Heart left ventricle (tissue), 16 donors: ENCODE measurements at regions of chrX and their contacts with region 1.

Region 1: DNA sequence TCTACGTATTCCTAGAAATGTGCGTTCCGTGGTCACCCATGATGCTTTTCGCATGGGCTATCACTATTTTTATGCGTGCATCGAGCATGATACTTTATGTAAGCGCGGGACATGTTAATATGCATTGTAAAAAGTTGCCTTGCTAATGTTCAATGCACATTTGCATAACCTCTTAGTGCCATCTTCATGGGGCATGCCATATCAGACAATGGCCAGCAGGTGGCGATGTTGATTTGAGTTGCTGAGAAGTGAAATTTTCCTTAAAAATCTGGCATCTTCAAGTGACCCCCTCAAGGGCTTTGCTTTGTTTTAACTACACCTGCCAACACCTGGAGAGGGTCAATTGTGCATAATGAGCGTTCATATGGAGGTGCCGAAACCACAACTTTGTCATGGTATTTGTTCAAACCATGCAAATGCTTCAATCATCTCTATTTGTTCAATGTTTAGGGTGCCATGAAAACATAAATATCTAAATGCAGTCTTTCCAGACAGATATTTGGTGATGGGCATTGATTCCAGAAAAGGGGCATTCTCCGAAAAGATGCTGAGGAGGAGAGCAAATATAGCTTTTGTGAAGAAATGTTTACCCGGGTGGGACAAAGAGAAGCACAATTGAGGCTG is 833.9 kb upstream of the PRKX start:
- DNase-seq: no peak
- ATAC-seq: no peak
- H3K4me3 ChIP-seq: no peak overlapping the region
- H3K27ac ChIP-seq: no peak overlapping the region
- H3K4me1 ChIP-seq: no peaks in the 10 kb centered on the region
- H3K27me3 ChIP-seq: no peaks in the 10 kb centered on the region
- CTCF ChIP-seq: peak; percentile 54 to 94 (median 68)
- POLR2A ChIP-seq: no peak

Region 2: GRCh38 chrX:3585719-3586118 is 961.6 kb before region 1 on chrX:
- intact Hi-C with region 1: no loop called
- DNase-seq: no peak
- ATAC-seq: no peak
- H3K4me3 ChIP-seq: no peak overlapping the region
- H3K27ac ChIP-seq: no peak overlapping the region
- H3K4me1 ChIP-seq: no peaks in the 10 kb centered on the region
- H3K27me3 ChIP-seq: no peaks in the 10 kb centered on the region
- CTCF ChIP-seq: no peak
- POLR2A ChIP-seq: no peak

Region 3: GRCh38 chrX:5113128-5113527 is 565.8 kb after region 1 on chrX:
- intact Hi-C with region 1: loop called in 5 of 10 experiments (anchors 2 to 10 kb)
- DNase-seq: no peak
- ATAC-seq: no peak
- H3K4me3 ChIP-seq: no peak overlapping the region
- H3K27ac ChIP-seq: no peak overlapping the region
- H3K4me1 ChIP-seq: no peaks in the 10 kb centered on the region
- H3K27me3 ChIP-seq: no peaks in the 10 kb centered on the region
- CTCF ChIP-seq: peak in 7 of 12 donors; percentile 22 to 39 (median 30)
- POLR2A ChIP-seq: no peak